ENCODE measurements at regions of chr1 and their contacts with region 1.

Region 1: DNA sequence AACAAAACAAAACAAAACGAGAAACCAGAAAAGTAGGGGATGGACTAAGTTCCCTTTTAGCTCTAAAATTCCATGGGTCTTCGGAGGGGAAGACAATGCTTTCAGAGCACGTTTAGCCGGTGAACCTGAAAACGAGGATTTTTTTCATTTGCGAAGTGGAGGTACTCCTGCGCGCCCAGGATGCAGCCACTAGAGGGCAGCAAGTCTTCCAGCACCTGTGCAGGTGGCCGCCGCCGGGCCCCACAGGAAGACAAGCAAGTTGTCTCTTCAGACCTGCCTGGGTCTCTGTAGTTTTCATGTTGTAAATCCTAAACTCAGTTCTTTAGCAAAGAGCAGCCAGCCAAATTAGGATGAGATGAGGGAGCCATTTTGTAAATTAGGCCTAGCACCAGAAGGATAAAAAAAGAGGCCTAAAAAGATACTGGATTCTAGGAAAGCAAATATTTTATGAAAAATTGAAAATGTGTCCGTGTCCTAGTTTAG is 17.7 kb upstream of the SNX27 start:
- DNase-seq: peak; percentile 80
- H3K4me3 ChIP-seq: peak overlapping the region in 1 of 2 experiments; percentile 28; a peak in 1 of 4 replicates
- H3K27ac ChIP-seq: no peak overlapping the region
- H3K4me1 ChIP-seq: peaks cover 0 to 6% of the 10 kb centered on the region in 2 experiments; a peak in 1 of 4 replicates
- H3K27me3 ChIP-seq: no peaks in the 10 kb centered on the region
- CTCF ChIP-seq: peak; percentile 97
- EP300 ChIP-seq: no peak
- RAD21 ChIP-seq: peak; percentile 78

Region 2: GRCh38 chr1:151562671-151563070 is 31.5 kb before region 1 on chr1:
- CTCF ChIA-PET with region 1: interaction called, 10 read pairs
- POLR2A ChIA-PET with region 1: no interaction called
- DNase-seq: peak; percentile 54
- H3K4me3 ChIP-seq: no peak overlapping the region
- H3K27ac ChIP-seq: peak overlapping the region in 1 of 2 experiments; percentile 75; a peak in 2 of 4 replicates
- H3K4me1 ChIP-seq: peaks cover 0 to 16% of the 10 kb centered on the region in 2 experiments; a peak in 2 of 4 replicates
- H3K27me3 ChIP-seq: no peaks in the 10 kb centered on the region
- CTCF ChIP-seq: no peak
- EP300 ChIP-seq: peak in 1 of 2 experiments; percentile 63; a peak in 1 of 4 replicates
- RAD21 ChIP-seq: no peak

Region 3: DNA sequence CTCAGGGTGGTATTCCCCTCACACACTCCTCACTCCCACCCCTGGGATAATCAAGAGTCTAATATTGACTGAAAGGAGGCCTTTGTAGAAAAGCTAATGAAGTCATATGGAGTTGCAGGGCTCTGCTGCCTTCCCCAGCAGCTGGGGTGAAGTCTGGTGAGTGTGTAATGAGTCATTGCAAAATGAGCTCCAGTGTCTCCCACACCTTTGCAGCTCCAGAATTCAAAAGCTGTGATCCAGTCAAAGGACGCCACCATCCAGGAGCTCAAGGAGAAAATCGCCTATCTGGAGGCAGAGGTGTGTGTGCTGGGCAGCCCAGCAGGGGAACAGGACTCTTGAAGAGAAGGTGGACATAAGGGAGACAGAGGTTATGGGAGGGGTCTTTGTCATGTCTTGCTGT is 14.7 kb before region 1 on chr1:
- CTCF ChIA-PET with region 1: interaction called, 34 read pairs
- POLR2A ChIA-PET with region 1: no interaction called
- DNase-seq: no peak
- H3K4me3 ChIP-seq: no peak overlapping the region
- H3K27ac ChIP-seq: no peak overlapping the region
- H3K4me1 ChIP-seq: peaks cover 0 to 7% of the 10 kb centered on the region in 2 experiments; a peak in 1 of 4 replicates
- H3K27me3 ChIP-seq: no peaks in the 10 kb centered on the region
- CTCF ChIP-seq: no peak
- EP300 ChIP-seq: no peak
- RAD21 ChIP-seq: no peak

Region 4: GRCh38 chr1:151693076-151693651 is 99.0 kb after region 1 on chr1:
- CTCF ChIA-PET with region 1: interaction called, 14 read pairs
- POLR2A ChIA-PET with region 1: no interaction called
- DNase-seq: peak; percentile 72
- H3K4me3 ChIP-seq: no peak overlapping the region; a peak in 1 of 4 replicates
- H3K27ac ChIP-seq: no peak overlapping the region
- H3K4me1 ChIP-seq: no peaks in the 10 kb centered on the region
- H3K27me3 ChIP-seq: no peaks in the 10 kb centered on the region
- CTCF ChIP-seq: peak; percentile 73
- EP300 ChIP-seq: no peak
- RAD21 ChIP-seq: peak; percentile 89

Region 5: DNA sequence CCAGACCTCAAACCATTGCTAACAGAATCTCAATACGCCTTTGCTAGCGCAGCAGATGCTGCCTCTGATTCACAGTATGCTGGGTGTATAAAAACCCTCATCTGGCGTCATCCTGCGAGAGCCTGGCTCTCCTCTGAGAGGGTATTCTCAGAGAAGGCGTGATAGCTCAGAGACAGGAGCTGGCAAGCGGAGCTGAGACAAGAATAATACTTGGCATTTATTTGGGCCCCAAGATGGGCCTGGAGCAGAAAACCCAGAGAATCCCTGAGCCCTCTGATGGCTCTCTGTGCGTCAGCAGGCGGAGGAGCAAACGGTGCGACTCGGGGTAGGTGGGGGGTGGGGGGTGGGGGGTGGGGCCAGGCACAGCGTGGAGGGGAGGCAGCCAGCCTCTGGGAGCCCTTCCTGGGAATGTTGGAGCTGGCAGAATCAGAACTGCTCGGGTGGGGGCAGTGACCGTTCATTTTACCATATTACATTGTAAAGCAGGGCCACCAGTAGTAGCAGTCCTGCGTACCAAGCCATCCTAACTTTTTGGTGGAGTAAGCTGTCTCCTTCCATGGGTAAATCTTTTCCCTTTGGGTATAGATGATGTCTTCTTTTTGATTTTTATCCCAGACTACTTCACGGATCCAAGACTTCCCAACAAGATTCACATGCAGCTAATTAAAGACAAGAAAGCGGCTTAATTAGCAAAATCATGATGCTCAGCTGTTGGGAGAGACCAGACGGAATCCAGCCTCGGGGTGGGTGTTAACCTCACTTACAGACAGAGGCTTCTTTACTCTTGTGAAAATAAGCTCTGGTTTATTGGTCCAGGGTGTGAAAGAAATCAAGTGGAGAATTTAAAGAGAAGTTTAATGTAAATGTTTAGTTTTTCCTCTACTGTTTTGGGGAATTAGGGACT is 134.2 kb after region 1 on chr1:
- CTCF ChIA-PET with region 1: interaction called, 35 read pairs
- POLR2A ChIA-PET with region 1: no interaction called
- DNase-seq: peak; percentile 77
- H3K4me3 ChIP-seq: peak overlapping the region in 1 of 2 experiments; percentile 6; a peak in 1 of 4 replicates
- H3K27ac ChIP-seq: peak overlapping the region in 1 of 2 experiments; percentile 78; a peak in 2 of 4 replicates
- H3K4me1 ChIP-seq: peaks cover 0 to 26% of the 10 kb centered on the region in 2 experiments; a peak in 2 of 4 replicates
- H3K27me3 ChIP-seq: no peaks in the 10 kb centered on the region
- CTCF ChIP-seq: no peak
- EP300 ChIP-seq: 0 out of 4 replicates have a peak, but pooled peaks of 1 of the 2 experiments have one; percentile 46
- RAD21 ChIP-seq: peak; percentile 17; the same call in 1 of the 2 replicates